Panc1 (cell line): ENCODE measurements at regions of chr6 and their contacts with region 1.

Region 1: GRCh38 chr6:16681260-16681873 is 79.9 kb downstream of the ATXN1 start:
- DNase-seq: peak; percentile 88
- ATAC-seq: peak; percentile 91
- H3K4me3 ChIP-seq: peak overlapping the region in 1 of 2 experiments; percentile 17; a peak in 1 of 4 replicates
- H3K27ac ChIP-seq: peak overlapping the region; percentile 80
- H3K4me1 ChIP-seq: peaks cover 72% of the 10 kb centered on the region
- H3K27me3 ChIP-seq: no peaks in the 10 kb centered on the region
- CTCF ChIP-seq: no peak

Region 2: GRCh38 chr6:16295060-16295459 is 386.3 kb before region 1 on chr6:
- CTCF ChIA-PET with region 1: no interaction called
- POLR2A ChIA-PET with region 1: interaction called, 10 read pairs
- in situ Hi-C with region 1: no loop called
- intact Hi-C with region 1: no loop called
- DNase-seq: no peak
- ATAC-seq: no peak
- H3K4me3 ChIP-seq: no peak overlapping the region
- H3K27ac ChIP-seq: no peak overlapping the region
- H3K4me1 ChIP-seq: no peaks in the 10 kb centered on the region
- H3K27me3 ChIP-seq: peaks cover 2% of the 10 kb centered on the region
- CTCF ChIP-seq: no peak

Region 3: GRCh38 chr6:16657768-16658167 is 23.6 kb before region 1 on chr6:
- CTCF ChIA-PET with region 1: no interaction called
- POLR2A ChIA-PET with region 1: interaction called, 17 read pairs
- in situ Hi-C with region 1: no loop called
- intact Hi-C with region 1: no loop called
- DNase-seq: no peak
- ATAC-seq: no peak
- H3K4me3 ChIP-seq: no peak overlapping the region
- H3K27ac ChIP-seq: no peak overlapping the region
- H3K4me1 ChIP-seq: peaks cover 10% of the 10 kb centered on the region; the same call in 1 of the 2 replicates
- H3K27me3 ChIP-seq: no peaks in the 10 kb centered on the region
- CTCF ChIP-seq: no peak